Activated T-helper 1 cell treated with anti-CD3 and anti-CD28 coated beads, Interleukin-12 subunit alpha, Interleukin-12 subunit beta, Interleukin-2, Interleukin-4 antibody, amounts not matched to agents 30 ng/mL and 10 ng/mL and 1 ng/mL, durations not matched to agents 14 hours and 24 hours and 36 hours (primary cell): ENCODE measurements at regions of chr4 and their contacts with region 1.

Region 1: GRCh38 chr4:26076000-26076587 is 162.1 kb downstream of the SMIM20 start:
- DNase-seq: peak; percentile 63
- H3K4me3 Mint-ChIP-seq: peak overlapping the region; percentile 64
- H3K27ac Mint-ChIP-seq: peak overlapping the region; percentile 92
- H3K4me1 Mint-ChIP-seq: peaks cover 86% of the 10 kb centered on the region
- H3K27me3 Mint-ChIP-seq: no peaks in the 10 kb centered on the region

Region 2: DNA sequence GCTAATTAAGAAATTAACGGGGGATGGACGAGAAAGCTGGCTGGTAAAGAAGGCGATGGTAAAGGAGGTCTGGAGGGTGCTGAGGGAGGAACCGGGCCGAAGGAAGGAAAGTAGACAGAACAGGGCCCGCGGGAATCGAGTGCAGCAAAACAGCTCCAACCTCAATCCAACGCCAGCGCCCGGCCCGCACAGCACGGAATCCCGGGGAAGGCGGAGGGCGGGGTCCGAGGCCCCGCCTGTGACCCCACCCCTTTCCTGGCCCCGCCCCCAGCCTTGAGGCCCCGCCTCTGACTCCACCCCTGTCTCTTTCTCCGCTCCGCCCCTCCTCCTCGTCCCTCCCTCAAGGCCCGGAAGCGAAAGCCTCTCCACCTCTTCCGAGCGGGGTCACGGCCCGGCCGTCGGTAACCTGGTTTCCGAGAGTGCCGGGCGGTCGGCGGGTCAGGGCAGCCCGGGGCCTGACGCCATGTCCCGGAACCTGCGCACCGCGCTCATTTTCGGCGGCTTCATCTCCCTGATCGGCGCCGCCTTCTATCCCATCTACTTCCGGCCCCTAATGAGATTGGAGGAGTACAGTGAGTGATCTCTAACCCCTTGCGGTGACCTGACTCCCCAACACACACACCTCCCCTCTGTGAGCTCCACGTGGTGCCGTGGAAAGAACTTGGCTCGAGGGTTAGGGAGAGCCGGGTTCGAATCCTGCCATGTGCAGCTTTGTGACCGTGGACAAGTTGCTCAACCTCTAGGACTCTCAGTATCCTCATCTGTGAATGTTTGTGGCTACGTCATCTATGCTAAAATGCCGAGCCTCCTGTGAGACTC is 162.0 kb before region 1 on chr4 and contains the start of gene SMIM20:
- intact Hi-C with region 1: loop called (anchors 1 kb)
- DNase-seq: peak; percentile 88
- H3K4me3 Mint-ChIP-seq: peak within 1 kb of the TSS; percentile 94
- H3K27ac Mint-ChIP-seq: peak within 1 kb of the TSS; percentile 99
- H3K4me1 Mint-ChIP-seq: peaks cover 24% of the 10 kb centered on the region
- H3K27me3 Mint-ChIP-seq: peaks cover 5% of the 10 kb centered on the region
- total RNA-seq, gene SMIM20: 19.2 and 21.5 TPM in 2 replicates

Region 3: DNA sequence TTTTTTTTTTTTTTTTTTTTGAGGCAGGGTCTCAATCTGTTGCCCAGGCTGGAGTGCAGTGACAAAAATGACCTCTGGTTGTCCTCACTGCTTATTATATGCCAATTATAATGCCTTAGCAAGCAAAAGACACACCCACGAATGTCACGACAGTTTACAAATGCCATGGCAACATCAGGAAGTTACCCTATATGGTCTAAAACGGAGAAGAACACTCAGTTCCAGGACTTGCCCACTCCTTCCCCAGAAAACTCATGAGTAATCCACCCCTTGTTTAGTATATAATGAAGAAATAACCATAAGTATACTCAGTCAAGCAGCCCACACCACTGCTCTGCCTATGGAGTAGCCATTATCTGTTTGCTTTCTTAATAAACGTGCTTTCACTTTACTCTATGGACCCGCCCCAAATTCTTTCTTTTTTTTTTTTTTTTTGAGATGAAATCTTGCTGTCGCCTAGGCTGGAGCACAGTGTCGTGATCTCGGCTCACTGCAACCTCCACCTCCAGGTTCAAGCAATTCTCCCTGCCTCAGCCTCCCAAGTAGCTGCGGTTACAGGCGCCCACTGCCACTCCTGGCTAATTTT is 55.9 kb before region 1 on chr4:
- intact Hi-C with region 1: loop called (anchors 1 kb)
- DNase-seq: no peak
- H3K4me3 Mint-ChIP-seq: no peak overlapping the region
- H3K27ac Mint-ChIP-seq: peak overlapping the region; percentile 18
- H3K4me1 Mint-ChIP-seq: peaks cover 21% of the 10 kb centered on the region
- H3K27me3 Mint-ChIP-seq: peaks cover 9% of the 10 kb centered on the region

Region 4: DNA sequence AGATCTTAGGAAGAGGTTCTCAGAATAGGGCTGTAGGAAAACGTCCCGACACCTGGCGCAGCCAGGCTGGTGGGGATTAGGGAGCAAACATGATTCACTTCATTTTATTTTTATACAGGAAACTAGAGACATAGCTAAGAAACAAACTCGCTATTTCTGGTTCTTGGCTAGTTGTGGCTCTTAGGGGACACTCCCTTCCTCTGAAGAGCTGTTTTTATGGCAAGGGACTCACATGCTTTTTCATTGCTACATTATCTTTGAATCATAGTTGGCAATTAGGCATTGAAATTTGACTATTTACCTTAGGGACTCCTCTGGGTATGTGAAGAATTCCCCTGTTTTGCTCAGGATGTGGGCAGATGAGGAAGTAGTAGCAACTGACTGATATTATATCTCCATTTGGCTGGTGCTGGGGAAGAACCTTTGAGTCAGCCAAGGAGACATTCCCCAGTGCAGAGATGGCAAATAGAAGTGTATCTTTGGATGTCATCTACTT is 12.4 kb after region 1 on chr4:
- intact Hi-C with region 1: loop called (anchors 1 kb)
- DNase-seq: peak; percentile 34
- H3K4me3 Mint-ChIP-seq: peak overlapping the region; percentile 71
- H3K27ac Mint-ChIP-seq: peak overlapping the region; percentile 94
- H3K4me1 Mint-ChIP-seq: peaks cover 68% of the 10 kb centered on the region
- H3K27me3 Mint-ChIP-seq: no peaks in the 10 kb centered on the region

Region 5: GRCh38 chr4:26141911-26142638 is 66.0 kb after region 1 on chr4:
- intact Hi-C with region 1: loop called (anchors 1 kb)
- DNase-seq: no peak
- H3K4me3 Mint-ChIP-seq: peak overlapping the region; percentile 3
- H3K27ac Mint-ChIP-seq: peak overlapping the region; percentile 78
- H3K4me1 Mint-ChIP-seq: peaks cover 67% of the 10 kb centered on the region
- H3K27me3 Mint-ChIP-seq: no peaks in the 10 kb centered on the region

Region 6: GRCh38 chr4:26307037-26307800 is 231.1 kb after region 1 on chr4:
- intact Hi-C with region 1: loop called (anchors 1 kb)
- DNase-seq: no peak
- H3K4me3 Mint-ChIP-seq: peak overlapping the region; percentile 23
- H3K27ac Mint-ChIP-seq: peak overlapping the region; percentile 88
- H3K4me1 Mint-ChIP-seq: peaks cover 36% of the 10 kb centered on the region
- H3K27me3 Mint-ChIP-seq: no peaks in the 10 kb centered on the region

Region 7: GRCh38 chr4:26459054-26459755 is 383.1 kb after region 1 on chr4:
- intact Hi-C with region 1: no loop called
- DNase-seq: no peak
- H3K4me3 Mint-ChIP-seq: no peak overlapping the region
- H3K27ac Mint-ChIP-seq: no peak overlapping the region
- H3K4me1 Mint-ChIP-seq: peaks cover 13% of the 10 kb centered on the region
- H3K27me3 Mint-ChIP-seq: peaks cover 2% of the 10 kb centered on the region

Region 8: GRCh38 chr4:26860157-26860921 is 784.2 kb after region 1 on chr4 and contains the start of gene STIM2:
- intact Hi-C with region 1: loop called (anchors 2 kb)
- DNase-seq: peak; percentile 100
- H3K4me3 Mint-ChIP-seq: peak within 1 kb of the TSS; percentile 91
- H3K27ac Mint-ChIP-seq: peak within 1 kb of the TSS; percentile 97
- H3K4me1 Mint-ChIP-seq: peaks cover 70% of the 10 kb centered on the region
- H3K27me3 Mint-ChIP-seq: no peaks in the 10 kb centered on the region
- total RNA-seq, gene STIM2: 54.1 and 55.6 TPM in 2 replicates